T-cell (primary cell): ENCODE measurements at regions of chr14 and their contacts with region 1.

Region 1: DNA sequence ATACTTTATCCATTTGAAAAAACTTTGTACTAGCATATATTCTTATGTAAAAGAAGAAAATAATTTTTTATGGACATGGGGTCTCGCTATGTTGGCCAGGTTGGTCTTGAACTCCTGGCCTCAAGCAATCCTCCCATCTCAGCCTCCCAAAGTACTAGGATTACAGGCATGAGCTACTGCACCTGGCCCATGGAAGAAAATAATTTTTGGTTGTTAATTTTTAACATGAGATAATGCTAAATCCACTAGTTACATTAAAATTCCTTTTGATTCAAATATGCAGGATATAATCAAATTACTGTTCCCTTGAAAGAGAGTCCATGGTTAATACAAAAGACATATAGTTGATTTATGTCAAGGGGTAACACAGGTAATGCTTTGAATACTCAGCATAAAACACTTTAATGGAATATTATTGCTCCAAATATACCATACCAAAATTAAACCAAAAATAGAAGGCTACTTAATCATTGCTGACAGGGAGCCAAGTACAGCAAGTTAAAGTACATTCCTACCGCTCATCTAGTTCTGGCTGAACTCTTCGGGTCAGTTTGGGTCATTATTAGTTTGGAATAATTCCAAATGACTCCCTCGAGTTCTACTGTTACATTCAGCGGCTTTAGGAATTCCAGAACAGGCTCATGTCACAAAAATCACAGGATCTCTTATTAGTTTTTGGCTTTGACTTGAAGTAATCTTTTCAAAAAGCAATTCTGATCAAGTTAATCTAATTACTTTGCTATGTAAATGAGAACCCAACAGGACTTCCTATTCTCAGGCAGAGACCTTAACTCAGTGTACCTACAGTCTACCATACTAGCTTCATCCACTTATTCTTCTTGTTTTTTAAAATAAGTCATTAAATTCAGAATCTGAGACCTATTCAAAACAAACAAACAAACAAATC is 6.1 kb downstream of the SOS2 start:
- DNase-seq: no peak
- ATAC-seq: peak in 1 of 4 experiments; percentile 27
- H3K4me3 ChIP-seq: no peak overlapping the region
- H3K4me3 Mint-ChIP-seq: peak overlapping the region in 1 of 3 donors; percentile 7
- H3K27ac ChIP-seq: no peak overlapping the region
- H3K27ac Mint-ChIP-seq: peak overlapping the region; percentile 81 to 85
- H3K4me1 ChIP-seq: peaks cover 10 to 13% of the 10 kb centered on the region in 2 experiments
- H3K4me1 Mint-ChIP-seq: peaks cover 62 to 79% (median 76%) of the 10 kb centered on the region in 3 donors
- H3K27me3 ChIP-seq: no peaks in the 10 kb centered on the region
- H3K27me3 Mint-ChIP-seq: no peaks in the 10 kb centered on the region

Region 2: DNA sequence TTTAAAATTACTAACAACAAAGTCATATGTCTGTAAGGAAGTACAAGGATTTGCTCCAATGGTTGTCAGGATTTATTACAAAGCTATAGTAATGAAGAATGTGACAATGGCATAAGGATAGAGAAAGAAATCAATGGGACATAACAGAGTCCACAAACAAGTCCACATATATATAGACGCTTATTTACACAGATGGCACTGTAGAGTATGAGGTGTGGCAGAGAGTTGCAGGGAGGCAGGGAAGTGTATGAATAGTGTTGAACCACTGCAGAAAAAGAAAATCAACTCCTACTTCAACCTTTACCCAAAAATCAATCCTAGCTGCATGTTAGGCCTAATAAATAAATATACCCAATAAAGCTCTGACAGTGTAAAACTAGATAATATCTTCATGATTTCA is 15.2 kb before region 1 on chr14:
- CTCF ChIA-PET with region 1: interaction called, 4 read pairs
- POLR2A ChIA-PET with region 1: interaction called, 5 to 13 read pairs
- DNase-seq: no peak
- ATAC-seq: no peak
- H3K4me3 ChIP-seq: no peak overlapping the region
- H3K4me3 Mint-ChIP-seq: no peak overlapping the region
- H3K27ac ChIP-seq: no peak overlapping the region
- H3K27ac Mint-ChIP-seq: no peak overlapping the region
- H3K4me1 ChIP-seq: no peaks in the 10 kb centered on the region
- H3K4me1 Mint-ChIP-seq: peaks cover 22 to 41% (median 28%) of the 10 kb centered on the region in 3 donors
- H3K27me3 ChIP-seq: no peaks in the 10 kb centered on the region
- H3K27me3 Mint-ChIP-seq: no peaks in the 10 kb centered on the region

Region 3: GRCh38 chr14:50237427-50237826 is 12.1 kb after region 1 on chr14:
- CTCF ChIA-PET with region 1: no interaction called
- POLR2A ChIA-PET with region 1: no interaction called
- DNase-seq: no peak
- ATAC-seq: no peak
- H3K4me3 ChIP-seq: no peak overlapping the region
- H3K4me3 Mint-ChIP-seq: no peak overlapping the region
- H3K27ac ChIP-seq: no peak overlapping the region
- H3K27ac Mint-ChIP-seq: no peak overlapping the region
- H3K4me1 ChIP-seq: peaks cover 0 to 9% of the 10 kb centered on the region in 2 experiments
- H3K4me1 Mint-ChIP-seq: peaks cover under 1 to 15% (median 10%) of the 10 kb centered on the region in 3 donors
- H3K27me3 ChIP-seq: no peaks in the 10 kb centered on the region
- H3K27me3 Mint-ChIP-seq: no peaks in the 10 kb centered on the region

Region 4: DNA sequence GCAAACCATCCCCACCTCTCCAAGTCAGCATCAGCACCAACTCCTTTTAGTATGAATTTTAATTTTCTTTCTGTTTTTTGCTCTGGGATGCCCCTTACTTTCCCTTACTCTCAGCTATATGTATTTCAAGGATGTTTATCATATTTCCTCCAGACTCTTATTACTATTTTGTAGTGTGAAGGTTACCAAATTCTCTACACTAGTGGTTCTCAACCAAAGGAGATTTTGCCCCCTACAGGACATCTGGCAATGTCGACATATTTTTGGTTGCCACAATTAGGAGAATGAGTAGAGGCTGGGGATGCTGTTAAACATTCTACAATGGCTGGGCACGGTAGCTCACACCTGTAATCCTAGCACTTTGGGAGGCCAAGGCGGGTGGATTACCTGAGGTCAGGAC is 35.2 kb after region 1 on chr14:
- CTCF ChIA-PET with region 1: no interaction called
- POLR2A ChIA-PET with region 1: interaction called in 1 of 2 experiments, 11 read pairs
- DNase-seq: peak in 13 of 35 experiments; percentile 1 to 54 (median 4)
- ATAC-seq: peak in 2 of 4 experiments; percentile 62 to 75
- H3K4me3 ChIP-seq: no peak overlapping the region
- H3K4me3 Mint-ChIP-seq: no peak overlapping the region
- H3K27ac ChIP-seq: no peak overlapping the region
- H3K27ac Mint-ChIP-seq: peak overlapping the region in 1 of 2 donors; percentile 69
- H3K4me1 ChIP-seq: no peaks in the 10 kb centered on the region
- H3K4me1 Mint-ChIP-seq: peaks cover 0 to 4% (median 2%) of the 10 kb centered on the region in 3 donors
- H3K27me3 ChIP-seq: no peaks in the 10 kb centered on the region
- H3K27me3 Mint-ChIP-seq: no peaks in the 10 kb centered on the region

Region 5: GRCh38 chr14:50347521-50347920 is 122.2 kb after region 1 on chr14:
- CTCF ChIA-PET with region 1: no interaction called
- POLR2A ChIA-PET with region 1: no interaction called
- DNase-seq: no peak
- ATAC-seq: no peak
- H3K4me3 ChIP-seq: no peak overlapping the region
- H3K4me3 Mint-ChIP-seq: no peak overlapping the region
- H3K27ac ChIP-seq: no peak overlapping the region
- H3K27ac Mint-ChIP-seq: no peak overlapping the region
- H3K4me1 ChIP-seq: peaks cover 0 to 4% of the 10 kb centered on the region in 2 experiments
- H3K4me1 Mint-ChIP-seq: peaks cover 0 to 22% (median 22%) of the 10 kb centered on the region in 3 donors
- H3K27me3 ChIP-seq: no peaks in the 10 kb centered on the region
- H3K27me3 Mint-ChIP-seq: no peaks in the 10 kb centered on the region